ENCODE measurements at regions of chr10 and their contacts with region 1.

Region 1: DNA sequence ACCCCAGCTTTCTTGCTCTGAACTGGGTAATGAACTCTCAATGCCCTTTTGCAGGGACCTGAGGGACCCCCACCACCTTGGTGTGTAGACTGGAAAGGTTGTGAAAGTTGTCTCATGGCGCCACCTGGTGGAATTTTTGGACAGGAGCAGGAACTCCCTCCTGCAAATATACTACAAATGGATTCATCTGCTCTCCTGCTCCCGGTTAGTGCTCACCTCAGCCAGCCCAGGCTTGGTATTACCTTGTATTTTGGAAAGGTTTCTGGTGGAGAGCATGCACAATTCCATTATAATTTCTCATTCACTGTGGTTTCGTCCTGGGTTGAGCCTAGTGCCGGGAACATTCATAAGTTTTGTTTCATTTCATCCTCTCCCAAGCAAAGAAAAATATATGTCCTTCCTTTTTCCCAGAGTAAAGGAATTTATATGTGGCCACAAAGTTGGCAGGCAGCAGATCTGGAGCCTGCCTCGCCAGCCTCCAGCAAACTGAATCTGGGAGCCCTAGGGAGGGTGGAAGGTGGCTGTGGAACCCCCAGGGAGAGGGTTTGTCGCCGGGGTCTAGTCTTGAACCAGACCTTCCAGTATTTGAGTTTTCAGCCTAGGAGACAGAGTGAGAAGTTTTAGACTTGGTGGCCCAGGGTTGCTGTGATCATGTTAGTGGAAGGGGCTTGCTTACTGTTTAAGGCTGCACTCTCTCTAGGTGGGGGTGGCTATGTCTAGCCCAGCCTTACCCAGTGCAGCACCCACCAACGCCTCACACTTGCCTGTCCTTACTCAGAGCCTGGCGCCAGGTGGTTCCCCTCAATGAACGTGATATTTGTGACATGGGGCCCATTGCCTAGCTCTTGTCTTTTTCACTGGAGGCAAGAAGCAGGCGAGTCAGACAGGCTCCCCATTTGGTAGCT is 9.5 kb downstream of the FAM241B start:
- DNase-seq: no peak
- H3K4me3 ChIP-seq: no peak overlapping the region
- H3K27ac ChIP-seq: no peak overlapping the region
- H3K4me1 ChIP-seq: peaks cover 0 to 4% (median under 1%) of the 10 kb centered on the region in 4 donors
- H3K27me3 ChIP-seq: peaks cover 0 to 24% (median 0%) of the 10 kb centered on the region in 4 donors
- CTCF ChIP-seq: peak; percentile 77 to 90 (median 83)
- EP300 ChIP-seq: no peak
- POLR2A ChIP-seq: no peak

Region 2: DNA sequence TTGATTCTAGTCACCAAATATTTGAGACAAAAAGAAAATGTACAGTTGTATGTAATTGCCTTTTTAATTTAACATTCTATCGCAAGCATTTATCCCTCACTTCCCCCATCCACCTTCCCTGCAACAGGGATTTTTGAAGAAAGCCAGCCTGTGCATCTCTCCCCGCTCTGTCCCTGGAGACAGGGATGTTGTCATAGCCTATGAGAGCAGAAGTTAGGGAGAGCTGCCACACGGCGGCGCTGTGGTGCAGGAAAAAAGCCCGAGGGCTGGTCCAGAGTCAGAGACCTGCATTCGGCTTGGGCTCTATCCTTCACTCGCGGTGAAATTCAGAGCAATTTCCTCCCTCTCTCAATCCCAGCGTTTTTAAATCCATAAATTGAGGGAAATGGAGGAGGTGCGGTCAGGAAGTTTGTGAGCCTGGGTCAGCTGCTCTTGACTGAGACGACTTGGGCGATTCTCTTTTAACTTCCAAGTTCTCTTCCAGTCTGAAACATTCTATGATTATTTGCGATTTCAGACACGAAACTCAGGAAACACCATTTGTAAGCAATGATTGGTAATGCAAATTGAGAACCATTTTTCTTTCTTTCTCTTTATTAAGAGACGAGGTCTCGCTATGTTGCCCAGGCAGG is 401.9 kb before region 1 on chr10:
- intact Hi-C with region 1: loop called (anchors 10 kb)
- DNase-seq: peak; percentile 96
- H3K4me3 ChIP-seq: no peak overlapping the region
- H3K27ac ChIP-seq: no peak overlapping the region
- H3K4me1 ChIP-seq: peaks cover 4 to 21% (median 11%) of the 10 kb centered on the region in 4 donors
- H3K27me3 ChIP-seq: no peaks in the 10 kb centered on the region
- CTCF ChIP-seq: peak; percentile 91 to 98 (median 91)
- EP300 ChIP-seq: no peak
- POLR2A ChIP-seq: no peak

Region 3: GRCh38 chr10:69408318-69409175 is 231.0 kb before region 1 on chr10:
- intact Hi-C with region 1: loop called (anchors 10 kb)
- DNase-seq: peak; percentile 98
- H3K4me3 ChIP-seq: peak overlapping the region; percentile 53 to 58 (median 56)
- H3K27ac ChIP-seq: peak overlapping the region; percentile 95 to 98 (median 97)
- H3K4me1 ChIP-seq: peaks cover 41 to 88% (median 82%) of the 10 kb centered on the region in 4 donors
- H3K27me3 ChIP-seq: no peaks in the 10 kb centered on the region
- CTCF ChIP-seq: peak; percentile 64 to 92 (median 85)
- EP300 ChIP-seq: no peak
- POLR2A ChIP-seq: no peak

Region 4: GRCh38 chr10:69425511-69426298 is 213.8 kb before region 1 on chr10:
- intact Hi-C with region 1: loop called (anchors 5 kb)
- DNase-seq: no peak
- H3K4me3 ChIP-seq: no peak overlapping the region
- H3K27ac ChIP-seq: peak overlapping the region; percentile 95 to 98 (median 97)
- H3K4me1 ChIP-seq: peaks cover 8 to 55% (median 47%) of the 10 kb centered on the region in 4 donors
- H3K27me3 ChIP-seq: no peaks in the 10 kb centered on the region
- CTCF ChIP-seq: no peak
- EP300 ChIP-seq: no peak
- POLR2A ChIP-seq: no peak

Region 5: GRCh38 chr10:69515699-69516259 is 123.8 kb before region 1 on chr10:
- intact Hi-C with region 1: loop called (anchors 5 kb)
- DNase-seq: peak; percentile 93
- H3K4me3 ChIP-seq: no peak overlapping the region
- H3K27ac ChIP-seq: no peak overlapping the region
- H3K4me1 ChIP-seq: no peaks in the 10 kb centered on the region
- H3K27me3 ChIP-seq: no peaks in the 10 kb centered on the region
- CTCF ChIP-seq: peak; percentile 41 to 69 (median 44)
- EP300 ChIP-seq: no peak
- POLR2A ChIP-seq: no peak

Region 6: DNA sequence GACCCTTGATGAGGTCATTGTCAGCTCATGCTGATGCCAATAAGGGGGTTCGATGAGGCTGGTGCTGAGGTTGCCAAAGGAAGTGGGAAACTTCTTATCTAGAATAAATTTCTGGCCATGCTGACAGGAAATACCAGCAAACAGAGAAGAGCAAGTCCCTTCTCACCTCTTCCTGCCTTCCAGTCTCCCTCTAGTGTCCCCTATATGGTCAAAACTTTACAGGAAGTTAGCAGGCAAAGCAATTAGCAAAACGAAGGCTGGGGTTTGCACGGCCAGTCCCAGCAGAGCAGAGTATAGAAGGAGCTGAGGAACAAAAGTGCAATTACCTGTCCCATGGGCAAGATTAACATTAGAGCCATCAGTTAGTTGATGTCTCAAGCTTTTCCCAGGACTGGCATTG is 51.2 kb before region 1 on chr10:
- intact Hi-C with region 1: no loop called
- DNase-seq: no peak
- H3K4me3 ChIP-seq: no peak overlapping the region
- H3K27ac ChIP-seq: no peak overlapping the region
- H3K4me1 ChIP-seq: no peaks in the 10 kb centered on the region
- H3K27me3 ChIP-seq: no peaks in the 10 kb centered on the region
- CTCF ChIP-seq: no peak
- EP300 ChIP-seq: no peak
- POLR2A ChIP-seq: no peak

Region 7: DNA sequence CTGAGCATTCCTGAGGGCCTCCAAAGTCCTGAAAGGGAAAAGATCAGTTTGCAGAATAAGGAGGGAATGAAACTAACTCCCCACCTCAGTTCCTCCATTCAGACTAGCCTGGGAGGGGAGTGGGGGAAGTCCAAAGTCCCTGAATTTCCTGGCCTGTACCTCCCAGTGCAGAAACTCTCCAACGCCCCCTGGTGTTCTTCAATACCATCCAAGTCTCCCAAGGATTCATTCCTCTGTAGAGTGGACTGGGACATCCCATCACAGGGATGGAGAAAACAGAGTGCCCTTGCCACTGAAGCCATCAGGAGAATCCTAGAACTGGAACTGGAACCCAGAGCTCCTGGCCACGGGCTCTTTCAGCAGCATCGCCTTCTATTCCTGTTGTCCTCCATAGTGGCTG is 160.6 kb after region 1 on chr10:
- intact Hi-C with region 1: loop called (anchors 5 kb)
- DNase-seq: no peak
- H3K4me3 ChIP-seq: no peak overlapping the region
- H3K27ac ChIP-seq: no peak overlapping the region
- H3K4me1 ChIP-seq: peaks cover 19 to 32% (median 27%) of the 10 kb centered on the region in 4 donors
- H3K27me3 ChIP-seq: peaks cover 0 to 28% (median 8%) of the 10 kb centered on the region in 4 donors
- CTCF ChIP-seq: peak; percentile 46 to 60 (median 51)
- EP300 ChIP-seq: no peak
- POLR2A ChIP-seq: no peak

Region 8: DNA sequence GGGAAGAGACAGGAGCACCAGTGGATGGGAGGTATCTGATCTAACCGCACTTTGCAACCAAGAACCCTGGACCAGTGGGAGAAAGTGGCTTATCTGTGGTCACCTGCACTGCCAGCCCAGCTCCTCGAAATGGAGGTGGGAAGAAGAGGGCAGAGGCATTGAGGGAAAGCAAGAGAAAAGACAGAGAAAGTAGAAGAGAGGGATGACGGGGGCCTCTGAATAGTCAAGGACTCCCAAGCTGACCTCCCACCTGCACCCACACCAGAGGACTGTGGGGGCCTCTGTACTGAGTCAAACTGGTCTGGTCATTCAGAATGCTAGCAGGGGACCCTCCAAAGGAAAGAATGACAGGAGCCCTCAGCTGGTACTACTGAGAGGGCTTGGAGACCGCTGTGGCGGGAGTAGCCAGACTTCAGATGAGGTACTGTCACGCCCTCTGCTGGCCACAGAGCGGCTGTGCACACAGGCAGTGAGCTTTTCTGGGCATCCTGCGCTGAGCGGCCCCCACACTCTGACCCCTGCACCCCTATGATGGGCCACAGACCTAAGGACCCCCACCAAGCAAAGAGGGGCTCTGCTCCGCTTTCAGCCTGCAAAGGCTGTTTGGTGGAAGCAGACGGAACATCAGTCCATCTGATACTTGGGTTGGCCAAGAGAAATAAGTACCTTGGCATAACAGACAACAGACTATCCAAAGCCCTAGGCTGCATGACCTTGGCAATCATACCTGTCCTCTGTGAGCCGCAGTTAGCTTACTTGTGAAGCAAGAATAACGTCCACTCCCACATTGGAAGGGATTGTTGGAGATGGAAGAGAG is 275.1 kb after region 1 on chr10:
- intact Hi-C with region 1: loop called (anchors 5 kb)
- DNase-seq: no peak
- H3K4me3 ChIP-seq: no peak overlapping the region
- H3K27ac ChIP-seq: no peak overlapping the region
- H3K4me1 ChIP-seq: peaks cover 12 to 45% (median 38%) of the 10 kb centered on the region in 4 donors
- H3K27me3 ChIP-seq: no peaks in the 10 kb centered on the region
- CTCF ChIP-seq: peak in 2 of 3 experiments; percentile 90 to 96
- EP300 ChIP-seq: no peak
- POLR2A ChIP-seq: no peak